Calu3 (cell line): ENCODE measurements at regions of chr13 and their contacts with region 1.

Region 1: DNA sequence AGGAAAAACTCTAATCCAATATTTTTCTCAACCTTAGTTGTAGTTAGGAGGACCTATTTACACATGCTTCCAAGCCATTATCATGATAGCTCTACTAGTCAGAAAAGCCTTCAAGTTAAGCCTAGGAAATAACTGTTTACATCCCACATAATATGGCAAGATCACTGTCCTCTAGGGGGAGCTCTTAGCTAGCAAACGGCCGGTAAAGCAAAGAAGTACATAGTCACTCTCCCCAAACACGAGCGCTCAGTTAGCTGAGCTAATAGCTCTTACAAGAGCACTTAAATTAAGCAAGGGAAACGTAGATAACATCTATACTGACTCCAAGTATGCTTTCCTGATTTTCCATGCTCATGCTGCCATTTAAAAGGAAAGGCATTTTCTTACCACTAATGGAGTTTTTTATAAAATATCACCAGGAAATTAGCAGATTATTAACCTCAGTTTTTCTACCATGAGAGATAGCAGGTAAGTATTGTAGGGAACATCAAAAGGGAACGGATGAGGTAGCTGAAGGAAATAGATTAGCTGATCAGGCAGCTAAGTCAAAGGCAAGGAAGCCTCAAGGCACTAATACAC is 100.6 kb upstream of the PABPC3 start:
- DNase-seq: peak; percentile 58
- H3K4me3 Mint-ChIP-seq: no peak overlapping the region
- H3K27ac Mint-ChIP-seq: no peak overlapping the region
- H3K4me1 Mint-ChIP-seq: no peaks in the 10 kb centered on the region
- H3K27me3 Mint-ChIP-seq: peaks cover 13% of the 10 kb centered on the region
- CTCF ChIP-seq: peak; percentile 36

Region 2: GRCh38 chr13:25097426-25097825 is 102.1 kb after region 1 on chr13:
- CTCF ChIA-PET with region 1: no interaction called
- intact Hi-C with region 1: no loop called
- DNase-seq: no peak
- H3K4me3 Mint-ChIP-seq: no peak overlapping the region
- H3K27ac Mint-ChIP-seq: no peak overlapping the region
- H3K4me1 Mint-ChIP-seq: no peaks in the 10 kb centered on the region
- H3K27me3 Mint-ChIP-seq: peaks cover 29% of the 10 kb centered on the region
- CTCF ChIP-seq: no peak

Region 3: DNA sequence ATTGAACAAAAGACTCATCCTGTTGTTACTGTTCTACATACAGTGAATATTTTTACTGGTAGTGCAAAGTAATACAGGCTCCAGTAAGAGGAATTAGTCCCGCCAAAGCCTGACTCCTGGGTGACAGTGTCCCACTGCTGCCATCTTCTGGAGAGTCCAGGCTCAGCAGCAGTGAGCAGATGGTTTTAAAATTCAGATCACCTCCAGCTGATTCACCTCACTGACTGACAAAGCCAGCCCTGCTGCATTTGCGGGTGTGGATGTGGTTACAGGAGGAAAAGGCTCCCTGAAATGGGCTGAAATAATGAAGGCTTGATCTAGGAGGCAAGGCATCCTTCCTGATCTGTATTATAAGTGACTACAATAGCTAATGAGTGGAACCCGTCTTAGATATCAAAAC is 118.9 kb after region 1 on chr13:
- CTCF ChIA-PET with region 1: interaction called, 3 read pairs
- intact Hi-C with region 1: loop called (anchors 10 kb)
- DNase-seq: peak; percentile 70
- H3K4me3 Mint-ChIP-seq: no peak overlapping the region
- H3K27ac Mint-ChIP-seq: no peak overlapping the region
- H3K4me1 Mint-ChIP-seq: no peaks in the 10 kb centered on the region
- H3K27me3 Mint-ChIP-seq: peaks cover 37% of the 10 kb centered on the region
- CTCF ChIP-seq: peak; percentile 44